ENCODE measurements at regions of chr10 and their contacts with region 1.

Region 1: DNA sequence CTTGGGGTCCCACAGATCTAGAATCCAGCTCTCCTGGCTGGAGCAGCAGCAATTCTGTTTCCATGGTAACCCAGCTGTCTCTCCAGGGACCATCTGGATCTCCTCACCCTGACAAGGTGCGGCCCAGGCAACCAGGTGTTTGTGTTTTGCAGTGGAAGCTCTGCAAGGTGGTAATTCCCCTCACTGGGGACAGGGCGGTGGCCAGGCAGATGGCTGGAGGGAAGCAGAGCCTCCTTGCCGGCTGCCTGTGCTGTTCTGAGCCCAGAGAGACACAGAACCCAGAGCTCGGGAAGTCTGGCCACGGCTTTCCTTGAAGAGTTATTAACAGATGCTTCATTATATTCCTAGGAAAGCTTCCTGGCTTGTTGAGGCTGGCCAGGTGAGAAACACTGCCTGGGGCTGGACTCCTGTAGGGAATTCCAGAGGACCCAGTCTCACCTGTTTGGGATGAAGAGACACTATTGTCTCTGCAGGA is 118.2 kb upstream of the PPIF start:
- DNase-seq: no peak

Region 2: GRCh38 chr10:78657163-78657861 is 571.8 kb before region 1 on chr10:
- intact Hi-C with region 1: no loop called
- DNase-seq: peak; percentile 33 to 91 (median 77)

Region 3: DNA sequence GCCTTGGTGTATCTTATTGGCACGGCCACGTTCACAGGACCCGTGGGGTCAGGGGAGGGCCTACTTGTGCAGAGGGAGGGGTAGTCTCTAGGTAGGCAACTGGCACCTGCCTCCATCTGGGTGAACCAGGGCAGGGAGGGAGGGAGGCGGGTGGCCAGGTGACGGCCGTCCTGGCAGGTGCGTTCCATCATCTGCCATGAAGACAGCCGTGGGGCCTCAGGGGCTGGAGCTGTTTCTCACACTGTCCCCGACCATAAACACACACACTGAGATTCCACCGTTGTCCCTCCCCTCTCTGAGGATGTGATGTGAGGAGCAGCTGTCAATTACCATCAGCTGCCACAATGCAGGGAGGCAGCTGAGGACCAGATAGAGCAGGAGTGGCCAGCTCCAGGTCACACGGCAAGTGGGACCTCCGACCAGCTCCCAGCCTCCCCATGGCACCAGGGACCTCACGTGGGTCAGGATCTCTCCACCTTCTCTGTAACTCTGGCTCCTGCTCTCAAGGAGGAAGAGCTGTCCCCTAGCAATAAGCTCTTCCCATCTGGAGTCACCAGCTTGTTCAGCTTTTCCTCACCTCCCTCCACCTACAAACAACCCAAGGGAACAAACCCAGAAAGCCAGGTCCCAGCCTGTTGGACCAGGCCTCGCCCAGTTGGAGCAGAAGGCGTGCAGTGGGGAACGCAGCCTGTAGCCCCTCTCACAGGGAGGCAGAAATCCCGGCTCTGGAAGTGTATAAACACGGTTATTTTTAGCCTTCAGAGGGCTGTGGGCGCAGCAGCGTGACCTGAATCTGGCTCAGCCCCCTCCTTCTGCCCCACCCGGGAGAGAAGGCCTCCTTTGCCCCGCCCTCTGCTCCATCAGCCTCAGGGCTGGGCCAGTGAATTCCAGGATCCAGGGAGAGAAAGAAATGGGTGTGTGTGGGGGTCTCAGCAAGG is 127.3 kb before region 1 on chr10:
- intact Hi-C with region 1: no loop called
- DNase-seq: peak; percentile 42 to 93 (median 76)

Region 4: GRCh38 chr10:79185796-79186374 is 43.2 kb before region 1 on chr10:
- intact Hi-C with region 1: loop called (anchors 2 kb)
- DNase-seq: no peak

Region 5: GRCh38 chr10:79202188-79203013 is 26.7 kb before region 1 on chr10:
- intact Hi-C with region 1: no loop called
- DNase-seq: peak in 20 of 42 donors; percentile 22 to 79 (median 56)